H1 (cell line): ENCODE measurements at regions of chr5 and their contacts with region 1.

Region 1: DNA sequence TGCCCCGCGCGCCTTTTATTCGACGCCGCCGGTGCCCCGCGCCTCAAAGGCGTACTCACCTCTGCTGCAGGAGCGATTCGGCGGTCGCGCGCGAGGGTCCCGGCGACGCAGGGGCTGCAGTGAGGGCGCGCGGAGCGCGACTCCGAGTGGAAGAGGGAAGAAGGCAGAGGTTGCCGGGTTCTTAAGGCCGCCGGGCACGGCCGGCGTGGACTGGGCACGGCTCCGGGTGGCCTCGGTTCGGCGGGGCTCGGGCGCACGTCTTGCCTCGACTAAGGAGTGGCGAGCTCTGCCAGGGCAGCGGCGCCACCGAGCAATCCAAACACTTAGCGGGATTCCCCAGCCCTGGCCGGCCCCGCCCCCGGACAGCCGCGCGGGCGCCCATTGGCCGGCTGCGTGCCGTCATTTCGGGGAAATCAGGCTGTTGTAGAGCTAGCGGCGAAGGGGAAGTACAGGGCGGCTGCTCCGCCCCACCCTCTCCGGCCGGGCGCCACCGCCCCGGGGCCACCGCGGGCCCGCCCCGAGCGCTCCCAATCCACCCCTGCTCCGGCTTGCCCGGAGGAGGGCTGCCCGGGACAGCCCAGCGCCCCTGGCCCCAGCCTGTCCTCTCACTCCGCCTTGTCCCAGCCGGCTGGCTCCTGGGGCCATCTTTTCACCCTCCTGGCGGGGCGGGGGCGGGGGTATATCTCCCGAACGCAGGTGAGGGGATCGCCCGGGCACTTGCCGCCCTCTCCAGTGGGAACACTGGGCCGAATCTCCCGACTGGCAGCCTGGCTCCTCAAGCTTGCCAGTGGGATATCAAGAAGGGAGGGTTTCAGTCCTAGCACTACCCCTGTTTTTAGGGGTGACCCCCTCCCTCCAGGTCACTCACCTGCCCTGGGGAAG is at the start of gene IRF1:
- DNase-seq: peak; percentile 78 to 95
- H3K4me3 ChIP-seq: peak within 1 kb of the TSS; percentile 60 to 71 (median 67)
- H3K27ac ChIP-seq: peak within 1 kb of the TSS; percentile 67; the same call in 1 of the 2 replicates
- H3K4me1 ChIP-seq: peaks cover 10 to 17% (median 15%) of the 10 kb centered on the region in 4 experiments
- H3K27me3 ChIP-seq: peaks cover 0 to 7% (median 4%) of the 10 kb centered on the region in 4 experiments; a peak in 3 of 7 replicates
- CTCF ChIP-seq: no peak
- EP300 ChIP-seq: no peak
- POLR2A ChIP-seq: peak in 1 of 2 experiments; percentile 93; a peak in 2 of 3 replicates
- RAD21 ChIP-seq: no peak; a peak in 1 of 4 replicates
- total RNA-seq, gene IRF1: 8.5 TPM in 2 replicates

Region 2: DNA sequence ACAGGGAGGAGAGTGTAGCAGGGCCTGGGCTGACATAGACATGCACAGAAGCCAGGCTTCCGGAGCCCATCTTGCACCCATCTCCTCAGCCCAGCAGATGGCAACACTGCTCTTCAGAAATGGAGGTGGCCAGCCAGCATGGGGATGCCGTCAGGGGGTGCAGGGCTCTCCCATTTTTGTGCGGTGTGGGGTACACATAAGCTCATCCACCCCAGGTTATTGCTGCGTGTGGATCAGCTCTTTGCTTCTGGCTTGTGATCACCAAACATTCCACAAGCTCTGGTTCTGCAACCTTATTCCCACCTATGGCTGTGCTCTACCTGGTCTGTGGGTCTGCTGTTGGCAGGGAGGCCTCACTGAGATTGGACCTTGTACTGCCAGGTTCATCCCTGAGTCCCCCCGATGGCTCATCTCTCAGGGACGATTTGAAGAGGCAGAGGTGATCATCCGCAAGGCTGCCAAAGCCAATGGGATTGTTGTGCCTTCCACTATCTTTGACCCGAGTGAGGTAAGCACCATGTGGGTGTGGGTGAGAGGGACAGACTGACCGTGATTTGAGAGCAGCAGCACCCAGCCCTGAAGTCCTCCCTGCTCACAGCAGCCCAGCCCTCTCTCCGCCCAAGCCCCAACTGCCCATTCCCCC is 104.0 kb before region 1 on chr5:
- CTCF ChIA-PET with region 1: interaction called, 353 read pairs
- POLR2A ChIA-PET with region 1: interaction called, 9 read pairs
- DNase-seq: peak in 1 of 2 experiments; percentile 81
- H3K4me3 ChIP-seq: no peak overlapping the region
- H3K27ac ChIP-seq: no peak overlapping the region
- H3K4me1 ChIP-seq: peaks cover 0 to 9% (median 3%) of the 10 kb centered on the region in 4 experiments; a peak in 4 of 7 replicates
- H3K27me3 ChIP-seq: no peaks in the 10 kb centered on the region
- CTCF ChIP-seq: peak; percentile 84 to 90 (median 86)
- EP300 ChIP-seq: no peak
- POLR2A ChIP-seq: no peak
- RAD21 ChIP-seq: peak; percentile 92 to 93

Region 3: GRCh38 chr5:132426525-132427138 is 64.1 kb before region 1 on chr5:
- CTCF ChIA-PET with region 1: interaction called, 201 read pairs
- POLR2A ChIA-PET with region 1: interaction called, 49 read pairs
- DNase-seq: peak in 1 of 2 experiments; percentile 51
- H3K4me3 ChIP-seq: no peak overlapping the region
- H3K27ac ChIP-seq: no peak overlapping the region; the same call in 1 of the 2 replicates
- H3K4me1 ChIP-seq: peaks cover 0 to 9% (median 5%) of the 10 kb centered on the region in 4 experiments; a peak in 5 of 7 replicates
- H3K27me3 ChIP-seq: no peaks in the 10 kb centered on the region; a peak in 1 of 7 replicates
- CTCF ChIP-seq: peak; percentile 51 to 66 (median 63)
- EP300 ChIP-seq: 0 out of 3 replicates have a peak, but pooled peaks of 1 of the 2 experiments have one; percentile 26
- POLR2A ChIP-seq: no peak
- RAD21 ChIP-seq: peak; percentile 60 to 79

Region 4: GRCh38 chr5:132456296-132457001 is 34.3 kb before region 1 on chr5:
- CTCF ChIA-PET with region 1: interaction called, 7 read pairs
- POLR2A ChIA-PET with region 1: interaction called, 35 read pairs
- DNase-seq: no peak
- H3K4me3 ChIP-seq: no peak overlapping the region
- H3K27ac ChIP-seq: no peak overlapping the region
- H3K4me1 ChIP-seq: peaks cover 1 to 17% (median 5%) of the 10 kb centered on the region in 4 experiments; a peak in 6 of 7 replicates
- H3K27me3 ChIP-seq: peaks cover 0 to 1% (median 0%) of the 10 kb centered on the region in 4 experiments; a peak in 1 of 7 replicates
- CTCF ChIP-seq: no peak
- EP300 ChIP-seq: no peak
- POLR2A ChIP-seq: no peak
- RAD21 ChIP-seq: no peak

Region 5: DNA sequence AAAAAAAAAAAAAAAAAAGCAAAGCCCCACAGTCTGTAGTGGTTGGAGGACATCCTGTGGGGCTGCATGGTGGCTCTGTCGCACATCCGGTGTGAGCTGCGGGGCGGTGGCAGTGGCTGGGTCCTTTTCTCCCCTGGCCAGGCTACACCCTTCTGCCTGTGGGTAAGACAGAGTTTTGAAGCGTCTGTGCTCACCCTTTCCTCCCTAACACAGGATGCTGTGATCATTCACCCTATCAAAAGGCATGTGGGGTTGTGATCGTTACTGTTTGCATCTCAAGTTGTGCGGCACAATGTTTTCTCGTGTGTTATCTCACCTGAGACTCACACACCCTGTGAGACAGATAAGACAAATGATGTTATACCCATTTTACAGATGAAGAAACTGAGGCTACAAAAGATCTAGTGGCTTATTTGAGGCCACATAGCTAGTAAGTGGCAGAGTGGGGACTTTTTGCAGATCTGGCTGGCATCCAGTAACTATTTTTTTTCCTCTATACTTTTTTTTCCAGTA is 17.7 kb before region 1 on chr5:
- CTCF ChIA-PET with region 1: interaction called, 77 read pairs
- POLR2A ChIA-PET with region 1: interaction called, 42 read pairs
- DNase-seq: no peak
- H3K4me3 ChIP-seq: no peak overlapping the region
- H3K27ac ChIP-seq: no peak overlapping the region
- H3K4me1 ChIP-seq: peaks cover 0 to 10% (median 0%) of the 10 kb centered on the region in 4 experiments; a peak in 2 of 7 replicates
- H3K27me3 ChIP-seq: no peaks in the 10 kb centered on the region
- CTCF ChIP-seq: no peak
- EP300 ChIP-seq: no peak
- POLR2A ChIP-seq: no peak
- RAD21 ChIP-seq: no peak